Activated CD4-positive, alpha-beta T cell treated with anti-CD3 and anti-CD28 coated beads, Interleukin-2, amount 10 ng/mL, durations not matched to agents 7 days and 5 days (primary cell): ENCODE measurements at regions of chr5 and their contacts with region 1.

Region 1: DNA sequence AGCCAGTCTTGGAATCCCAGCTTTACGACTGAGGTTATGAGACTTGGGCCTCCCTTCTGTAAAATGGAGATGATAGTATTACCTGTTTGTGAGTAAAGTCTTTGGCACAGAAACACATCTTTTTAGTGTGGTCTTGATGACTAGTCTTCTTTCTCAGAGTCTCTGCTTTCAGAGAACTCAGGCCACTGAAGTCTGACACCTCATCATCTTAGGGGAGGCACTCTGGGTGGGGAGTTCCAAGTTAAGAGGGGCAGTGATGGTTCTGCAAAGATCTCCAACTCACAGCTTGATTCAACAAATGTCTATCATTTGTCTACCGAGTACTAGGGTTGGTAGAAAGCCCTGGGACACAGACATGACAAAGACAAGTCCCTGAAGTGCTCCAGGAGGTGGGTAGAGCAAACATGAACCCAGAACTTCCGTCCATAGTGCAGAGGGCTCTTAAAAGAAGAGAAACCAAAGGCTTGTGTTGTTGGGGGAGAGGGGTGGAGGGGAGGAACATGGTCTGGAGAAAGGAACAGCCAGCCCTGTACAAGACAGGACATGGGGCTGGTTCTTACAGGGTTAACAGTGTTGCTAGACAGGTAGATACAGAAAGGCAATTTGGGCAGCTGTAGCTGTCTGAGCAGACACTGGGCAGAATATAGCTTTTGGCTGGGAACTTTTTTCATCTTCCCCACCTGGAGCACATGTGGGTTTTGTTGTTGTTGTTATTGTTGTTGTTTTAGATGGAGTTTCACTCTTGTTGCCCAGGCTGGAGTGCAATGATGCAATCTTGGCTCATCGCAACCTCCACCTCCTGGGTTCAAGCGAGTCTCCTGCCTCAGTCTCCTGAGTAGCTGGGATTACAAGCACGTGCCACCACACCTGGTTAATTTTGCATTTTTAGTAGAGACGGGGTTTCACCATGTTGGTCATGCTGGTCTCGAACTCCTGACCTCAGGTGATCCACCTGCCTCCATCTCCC is 2.6 kb upstream of the CD14 start:
- DNase-seq: no peak
- H3K4me3 Mint-ChIP-seq: no peak overlapping the region
- H3K27ac Mint-ChIP-seq: no peak overlapping the region
- H3K4me1 Mint-ChIP-seq: peaks cover 52% of the 10 kb centered on the region
- H3K27me3 Mint-ChIP-seq: peaks cover 18% of the 10 kb centered on the region

Region 2: GRCh38 chr5:140647042-140647341 is 11.4 kb after region 1 on chr5:
- CTCF ChIA-PET with region 1: interaction called, 20 read pairs
- POLR2A ChIA-PET with region 1: interaction called, 4 read pairs
- DNase-seq: no peak
- H3K4me3 Mint-ChIP-seq: peak overlapping the region; percentile 92
- H3K27ac Mint-ChIP-seq: peak overlapping the region; percentile 96
- H3K4me1 Mint-ChIP-seq: peaks cover 44% of the 10 kb centered on the region
- H3K27me3 Mint-ChIP-seq: no peaks in the 10 kb centered on the region